ENCODE measurements at regions of chr19 and their contacts with region 1.

Region 1: DNA sequence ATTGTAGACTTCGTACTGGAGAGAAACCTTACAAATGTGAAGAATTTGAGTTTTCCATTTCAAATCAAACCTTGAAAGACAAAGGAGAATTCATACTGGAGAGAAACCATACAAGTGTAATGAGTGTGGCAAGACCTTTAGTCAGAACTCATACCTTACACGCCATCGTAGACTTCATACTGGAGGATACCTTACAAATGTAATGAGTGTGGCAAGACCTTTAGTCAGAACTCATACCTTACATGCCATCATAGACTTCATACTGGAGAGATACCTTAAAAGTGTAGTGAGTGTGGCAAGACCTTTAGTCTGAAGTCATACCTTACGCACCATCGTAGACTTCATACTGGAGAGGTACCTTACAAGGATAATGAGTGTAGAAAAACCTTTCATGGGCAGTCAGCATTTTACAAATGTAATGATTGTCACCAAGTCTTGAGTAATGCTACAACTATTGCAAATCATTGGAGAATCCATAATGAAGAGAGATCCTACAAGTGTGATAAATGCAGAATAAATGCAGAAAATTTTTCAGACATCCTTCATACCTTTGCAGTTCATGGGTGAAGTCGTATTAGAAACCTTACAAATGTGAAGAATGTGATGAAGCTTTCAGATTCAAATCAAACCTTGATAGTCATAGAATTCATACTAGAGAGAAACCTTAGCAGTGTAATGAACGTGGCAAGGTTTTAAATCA is 14.7 kb downstream of the ZNF765 start:
- DNase-seq: no peak
- H3K4me3 ChIP-seq: no peak overlapping the region
- H3K27ac ChIP-seq: no peak overlapping the region
- H3K4me1 ChIP-seq: no peaks in the 10 kb centered on the region
- H3K27me3 ChIP-seq: no peaks in the 10 kb centered on the region
- CTCF ChIP-seq: no peak
- EP300 ChIP-seq: no peak
- POLR2A ChIP-seq: no peak

Region 2: DNA sequence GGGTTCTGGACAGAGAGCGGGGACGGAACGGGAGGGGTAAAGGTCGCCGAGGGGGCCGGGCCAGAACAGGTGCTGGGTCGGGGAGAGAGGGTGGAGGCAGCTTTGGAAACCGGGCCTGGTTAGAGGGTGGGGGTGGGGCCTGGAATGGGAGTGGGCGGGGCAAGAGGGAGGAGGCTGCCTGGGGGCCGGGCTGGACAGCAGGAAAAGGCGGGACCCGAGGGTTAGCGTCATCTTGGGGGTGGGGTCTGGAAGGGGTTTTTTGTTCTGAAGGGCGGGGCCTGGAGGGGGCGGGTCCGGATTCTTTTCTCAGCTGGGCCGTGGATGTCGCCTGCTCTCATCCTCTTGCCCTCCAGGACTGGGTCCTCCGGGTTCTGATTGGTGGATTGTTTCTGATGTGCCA is 53.6 kb after region 1 on chr19:
- in situ Hi-C with region 1: no loop called
- intact Hi-C with region 1: no loop called
- DNase-seq: peak; percentile 15
- H3K4me3 ChIP-seq: no peak overlapping the region
- H3K27ac ChIP-seq: no peak overlapping the region
- H3K4me1 ChIP-seq: peaks cover 2 to 10% (median 8%) of the 10 kb centered on the region in 4 donors
- H3K27me3 ChIP-seq: peaks cover 19% of the 10 kb centered on the region
- CTCF ChIP-seq: no peak
- EP300 ChIP-seq: no peak
- POLR2A ChIP-seq: no peak

Region 3: DNA sequence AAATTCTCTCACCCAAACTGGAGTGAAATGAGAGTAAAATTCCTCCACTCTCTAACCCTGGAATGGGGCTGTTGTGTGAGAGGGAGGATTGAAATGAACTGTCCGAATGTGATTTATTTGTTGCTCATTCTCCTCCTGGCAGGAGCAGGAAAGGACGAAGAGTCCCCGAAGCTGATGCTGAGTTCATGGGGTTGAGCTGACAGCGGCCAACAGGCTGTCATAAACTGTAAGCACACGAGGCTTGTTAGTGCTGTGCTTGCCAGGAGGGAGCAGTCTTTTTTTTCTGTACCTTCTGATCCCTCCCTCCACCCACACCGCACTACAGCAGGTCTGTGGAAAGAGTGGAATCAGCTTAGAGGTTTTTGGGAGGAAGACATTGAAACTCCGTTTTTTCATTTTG is 95.2 kb after region 1 on chr19:
- in situ Hi-C with region 1: loop called in 1 of 4 experiments (anchors 10 kb)
- intact Hi-C with region 1: no loop called
- DNase-seq: no peak
- H3K4me3 ChIP-seq: peak overlapping the region in 1 of 4 donors; percentile 14
- H3K27ac ChIP-seq: peak overlapping the region in 3 of 4 donors; percentile 9 to 68 (median 37)
- H3K4me1 ChIP-seq: no peaks in the 10 kb centered on the region
- H3K27me3 ChIP-seq: no peaks in the 10 kb centered on the region
- CTCF ChIP-seq: no peak
- EP300 ChIP-seq: peak; percentile 33
- POLR2A ChIP-seq: no peak